ENCODE measurements at regions of chr9 and their contacts with region 1.

Region 1: DNA sequence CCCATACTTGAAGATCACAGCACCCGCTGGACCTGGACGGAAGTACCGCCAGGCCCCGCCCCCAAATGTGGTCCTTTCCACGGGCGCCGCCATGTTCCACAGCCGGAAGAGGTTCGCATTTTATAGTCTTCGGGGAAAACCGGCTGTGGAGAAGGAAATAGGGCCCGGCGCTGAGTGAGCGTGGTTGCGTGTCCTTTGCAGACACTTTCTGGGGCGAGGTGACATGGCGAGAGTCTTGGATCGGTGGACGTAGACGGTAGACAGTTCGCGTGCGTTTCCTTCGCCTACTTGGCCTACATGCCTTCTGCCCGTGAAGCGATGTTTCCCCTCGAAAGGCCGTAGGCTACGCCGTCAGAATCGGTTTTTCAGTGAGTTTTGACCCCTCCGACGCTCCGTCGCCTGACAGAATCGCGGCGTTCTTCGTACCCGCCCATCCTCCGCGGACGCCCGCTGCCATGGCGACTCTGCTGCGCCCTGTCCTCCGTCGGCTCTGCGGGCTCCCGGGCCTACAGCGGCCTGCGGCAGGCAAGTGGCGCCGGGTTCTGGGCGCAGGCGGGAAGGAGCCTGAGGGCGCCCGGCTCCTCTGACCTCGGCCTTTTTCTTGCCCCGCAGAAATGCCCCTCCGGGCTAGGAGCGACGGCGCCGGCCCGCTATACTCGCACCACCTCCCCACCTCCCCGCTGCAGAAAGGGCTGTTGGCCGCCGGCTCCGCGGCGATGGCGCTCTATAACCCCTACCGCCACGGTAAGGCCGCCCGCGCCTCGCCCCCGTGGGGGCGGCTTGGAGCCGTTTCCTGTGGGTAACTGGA is at the starts of genes COQ4 and TRUB2:
- DNase-seq: peak; percentile 88 to 94
- H3K4me3 ChIP-seq: peak within 1 kb of the TSS; percentile 100
- H3K27ac ChIP-seq: peak within 1 kb of the TSS; percentile 74
- H3K4me1 ChIP-seq: peaks cover 21% of the 10 kb centered on the region
- H3K27me3 ChIP-seq: no peaks in the 10 kb centered on the region
- CTCF ChIP-seq: no peak
- total RNA-seq, gene COQ4: 81.8 and 89.5 TPM in 2 replicates
- total RNA-seq, gene TRUB2: 47.6 and 62.1 TPM in 2 replicates

Region 2: DNA sequence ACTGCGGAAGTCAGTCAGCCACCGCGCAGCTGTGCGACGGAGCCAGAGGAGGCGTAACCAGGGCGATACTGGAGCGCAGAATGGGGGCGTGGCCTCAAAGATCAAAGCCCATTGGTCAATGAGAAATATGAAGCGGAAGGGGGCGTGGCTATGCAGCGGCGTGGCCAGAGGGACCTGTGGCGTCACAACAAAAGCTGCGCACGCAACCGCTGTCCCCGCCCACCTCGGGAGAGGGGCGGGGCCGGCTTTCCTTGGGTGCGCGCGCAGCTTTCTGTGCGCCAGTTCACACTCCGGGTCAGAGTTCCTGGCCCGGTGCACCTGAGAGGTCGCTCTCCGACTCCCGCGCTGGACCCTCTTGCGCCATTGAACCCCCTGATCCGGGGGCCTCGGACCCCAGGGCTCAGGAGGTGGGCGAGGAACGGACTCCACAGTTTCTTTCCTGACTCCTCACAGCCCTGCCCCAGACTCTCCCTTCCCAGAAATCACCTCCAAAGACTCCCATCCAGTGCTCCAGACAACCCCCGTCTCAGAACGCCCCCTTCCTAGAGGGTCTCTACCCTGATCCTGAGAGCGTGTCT is 46.5 kb before region 1 on chr9 and contains the starts of genes GOLGA2 and SWI5:
- CTCF ChIA-PET with region 1: no interaction called
- POLR2A ChIA-PET with region 1: no interaction called
- intact Hi-C with region 1: loop called (anchors 2 kb)
- DNase-seq: peak; percentile 95 to 100
- H3K4me3 ChIP-seq: peak within 1 kb of the TSS; percentile 65
- H3K27ac ChIP-seq: peak within 1 kb of the TSS; percentile 51; the same call in 1 of the 2 replicates
- H3K4me1 ChIP-seq: peaks cover 36% of the 10 kb centered on the region
- H3K27me3 ChIP-seq: no peaks in the 10 kb centered on the region
- CTCF ChIP-seq: no peak
- total RNA-seq, gene GOLGA2: 175 and 188 TPM in 2 replicates
- total RNA-seq, gene SWI5: 70.4 and 86.0 TPM in 2 replicates

Region 3: DNA sequence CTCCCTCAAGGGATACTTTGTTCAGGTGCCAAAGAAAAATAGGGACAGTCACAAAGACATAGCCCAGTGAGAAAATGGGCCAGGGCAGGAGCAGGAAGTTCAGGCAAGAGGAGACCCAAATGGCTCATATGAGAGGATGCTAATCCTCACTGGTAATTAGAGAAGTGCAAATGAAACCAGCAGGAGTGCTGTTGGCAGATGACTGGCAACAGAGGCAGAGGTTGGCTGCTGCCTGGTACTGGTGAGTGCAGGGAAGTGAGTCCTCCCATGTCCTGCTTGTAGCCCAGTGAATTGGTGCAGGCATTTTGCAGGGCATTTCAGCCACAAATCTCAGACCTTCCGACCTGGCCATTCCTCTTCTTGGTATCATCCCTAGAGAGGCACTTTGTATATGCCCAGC is 156.7 kb after region 1 on chr9:
- CTCF ChIA-PET with region 1: no interaction called
- POLR2A ChIA-PET with region 1: interaction called, 11 read pairs
- intact Hi-C with region 1: no loop called
- DNase-seq: no peak
- H3K4me3 ChIP-seq: no peak overlapping the region
- H3K27ac ChIP-seq: no peak overlapping the region
- H3K4me1 ChIP-seq: no peaks in the 10 kb centered on the region
- H3K27me3 ChIP-seq: no peaks in the 10 kb centered on the region
- CTCF ChIP-seq: no peak

Measured in PC-9 (cell line).